ENCODE measurements at regions of chr7 and their contacts with region 1.

Region 1: DNA sequence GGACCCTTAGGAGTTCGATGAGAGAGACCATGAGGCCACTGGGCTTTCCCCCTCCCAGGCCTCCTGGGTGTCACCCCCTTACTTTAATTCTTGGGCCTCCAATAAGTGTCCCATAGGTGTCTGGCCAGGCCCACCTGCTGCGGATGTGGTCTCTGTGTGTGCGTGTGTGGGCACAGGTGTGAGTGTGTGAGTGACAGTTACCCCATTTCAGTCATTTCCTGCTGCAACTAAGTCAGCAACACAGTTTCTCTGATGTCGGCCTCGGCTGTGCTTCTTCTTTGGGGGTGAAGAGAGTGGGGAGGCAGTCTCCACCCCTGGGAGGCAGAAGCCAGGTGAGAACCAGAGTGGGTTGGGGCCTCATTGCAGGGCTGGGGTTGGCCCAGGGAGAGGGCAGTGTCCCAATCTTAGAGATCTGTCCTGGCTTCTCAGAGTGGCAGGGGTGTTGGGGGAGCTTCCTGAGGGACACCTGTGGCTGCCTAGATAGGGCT is 1.5 kb downstream of the PVRIG start:
- DNase-seq: no peak
- H3K4me3 ChIP-seq: no peak overlapping the region
- H3K4me3 Mint-ChIP-seq: no peak overlapping the region
- H3K27ac Mint-ChIP-seq: no peak overlapping the region
- H3K4me1 ChIP-seq: no peaks in the 10 kb centered on the region
- H3K4me1 Mint-ChIP-seq: no peaks in the 10 kb centered on the region
- H3K27me3 ChIP-seq: no peaks in the 10 kb centered on the region
- H3K27me3 Mint-ChIP-seq: no peaks in the 10 kb centered on the region
- CTCF ChIP-seq: no peak

Region 2: DNA sequence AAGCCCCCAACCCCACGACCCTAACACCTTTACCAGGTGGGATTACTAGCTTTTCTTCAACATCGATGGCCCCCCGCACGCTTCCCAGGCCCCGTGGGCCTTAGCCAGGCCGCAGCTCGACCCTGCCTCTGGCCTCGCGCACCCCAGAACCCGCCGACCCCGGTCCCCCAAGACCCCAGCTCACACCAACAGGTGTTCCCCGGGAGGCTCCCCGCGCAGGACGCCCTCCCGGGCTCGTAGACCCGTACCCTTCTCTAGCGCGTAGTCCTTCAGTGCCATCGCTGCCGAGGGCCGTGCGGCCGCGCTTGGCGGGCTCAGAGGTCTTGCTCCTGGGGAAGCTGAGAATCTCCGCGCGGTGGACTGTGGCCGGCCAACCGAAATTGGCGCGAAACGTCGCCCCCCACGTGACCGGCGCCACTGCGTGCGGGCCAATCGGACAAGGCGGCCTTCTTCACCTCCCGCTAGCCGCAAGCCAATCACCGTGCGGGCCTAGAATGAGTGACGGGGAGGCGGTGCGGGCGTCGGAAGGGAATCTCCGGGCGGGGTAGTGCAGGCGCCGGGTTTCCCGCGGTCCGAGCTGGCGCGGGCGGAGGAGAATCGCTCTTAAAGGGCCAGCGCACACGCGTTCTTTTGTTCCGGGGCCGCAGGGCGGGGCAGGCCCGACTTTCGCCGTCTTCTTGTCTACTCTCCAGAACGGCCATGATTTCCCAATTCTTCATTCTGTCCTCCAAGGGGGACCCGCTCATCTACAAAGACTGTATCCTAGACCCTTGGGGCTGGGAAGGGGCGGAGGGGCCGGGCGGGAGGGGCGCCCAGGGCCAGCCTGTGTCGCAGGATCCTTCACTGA is 120.0 kb before region 1 on chr7 and contains the starts of genes AP4M1 and MCM7:
- CTCF ChIA-PET with region 1: no interaction called
- POLR2A ChIA-PET with region 1: no interaction called
- intact Hi-C with region 1: no loop called
- DNase-seq: peak; percentile 99 to 100
- H3K4me3 ChIP-seq: peak within 1 kb of the TSS; percentile 93
- H3K4me3 Mint-ChIP-seq: peak within 1 kb of the TSS; percentile 95
- H3K27ac Mint-ChIP-seq: peak within 1 kb of the TSS; percentile 99
- H3K4me1 ChIP-seq: peaks cover 5% of the 10 kb centered on the region; the same call in 1 of the 2 replicates
- H3K4me1 Mint-ChIP-seq: peaks cover 23% of the 10 kb centered on the region
- H3K27me3 ChIP-seq: no peaks in the 10 kb centered on the region
- H3K27me3 Mint-ChIP-seq: no peaks in the 10 kb centered on the region
- CTCF ChIP-seq: no peak
- total RNA-seq, gene AP4M1: 14.9 and 16.2 TPM in 2 replicates
- total RNA-seq, gene MCM7: 227 and 240 TPM in 2 replicates

Region 3: GRCh38 chr7:100132697-100133151 is 88.6 kb before region 1 on chr7:
- CTCF ChIA-PET with region 1: interaction called, 13 read pairs
- POLR2A ChIA-PET with region 1: interaction called, 8 read pairs
- intact Hi-C with region 1: loop called (anchors 1 kb)
- DNase-seq: peak; percentile 77 to 80
- H3K4me3 ChIP-seq: no peak overlapping the region
- H3K4me3 Mint-ChIP-seq: no peak overlapping the region
- H3K27ac Mint-ChIP-seq: no peak overlapping the region
- H3K4me1 ChIP-seq: peaks cover 7% of the 10 kb centered on the region; the same call in 1 of the 2 replicates
- H3K4me1 Mint-ChIP-seq: peaks cover 17% of the 10 kb centered on the region
- H3K27me3 ChIP-seq: no peaks in the 10 kb centered on the region
- H3K27me3 Mint-ChIP-seq: no peaks in the 10 kb centered on the region
- CTCF ChIP-seq: peak; percentile 91 to 95

Region 4: DNA sequence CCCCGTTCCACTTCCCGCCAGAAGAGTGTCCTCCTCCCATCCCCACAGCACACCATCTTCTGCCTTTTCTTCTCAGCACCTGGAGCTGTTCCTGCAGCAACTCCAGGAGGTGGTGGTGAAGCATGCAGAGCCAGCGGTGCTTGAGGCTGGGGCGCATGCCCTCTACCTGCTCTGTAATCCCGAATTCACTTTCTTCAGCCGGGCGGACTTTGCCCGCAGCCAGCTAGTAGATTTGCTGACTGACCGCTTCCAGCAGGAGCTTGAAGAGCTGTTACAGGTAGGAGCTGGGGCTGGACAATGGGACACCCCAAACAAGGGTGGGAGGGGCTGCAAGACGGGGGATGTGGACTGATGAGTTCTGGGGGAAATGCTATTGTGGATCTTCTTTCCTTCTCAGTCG is 20.6 kb before region 1 on chr7:
- CTCF ChIA-PET with region 1: no interaction called
- POLR2A ChIA-PET with region 1: no interaction called
- intact Hi-C with region 1: loop called (anchors 1 kb)
- DNase-seq: peak; percentile 59 to 61
- H3K4me3 ChIP-seq: no peak overlapping the region
- H3K4me3 Mint-ChIP-seq: peak overlapping the region; percentile 18
- H3K27ac Mint-ChIP-seq: peak overlapping the region; percentile 1
- H3K4me1 ChIP-seq: peaks cover 15% of the 10 kb centered on the region
- H3K4me1 Mint-ChIP-seq: peaks cover 18% of the 10 kb centered on the region
- H3K27me3 ChIP-seq: no peaks in the 10 kb centered on the region
- H3K27me3 Mint-ChIP-seq: no peaks in the 10 kb centered on the region
- CTCF ChIP-seq: peak in 1 of 2 experiments; percentile 4

Region 5: DNA sequence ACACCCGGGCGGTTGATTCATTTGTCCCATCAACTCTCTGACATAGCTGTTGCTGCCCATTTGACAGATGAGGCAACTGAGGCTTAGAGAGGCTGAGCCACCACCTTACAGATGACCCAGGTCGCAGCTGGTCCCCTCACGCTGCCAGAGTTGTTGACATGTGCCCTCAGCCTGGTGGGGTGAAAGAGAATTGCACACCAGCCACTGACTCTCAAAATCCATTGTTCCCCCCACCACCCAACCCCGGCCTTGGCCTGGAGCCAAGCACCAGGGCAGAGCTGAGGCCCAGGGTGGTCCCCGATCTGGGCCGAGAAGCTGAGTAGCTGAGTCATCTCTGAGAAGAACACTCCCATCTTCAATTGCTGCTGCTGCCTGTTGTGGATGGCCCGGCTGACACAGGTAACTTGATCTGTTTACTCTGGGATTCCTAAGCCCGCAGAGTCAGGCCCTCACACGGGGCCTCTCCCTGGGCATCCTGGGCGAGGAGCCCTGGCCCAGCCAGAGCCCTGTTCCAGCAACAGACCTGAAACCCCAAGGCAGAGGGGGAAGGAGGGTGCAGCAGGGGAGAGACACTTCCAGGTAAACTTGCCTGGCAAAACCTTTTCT is 26.0 kb after region 1 on chr7:
- CTCF ChIA-PET with region 1: interaction called, 10 read pairs
- POLR2A ChIA-PET with region 1: no interaction called
- intact Hi-C with region 1: no loop called
- DNase-seq: peak; percentile 83 to 90
- H3K4me3 ChIP-seq: no peak overlapping the region
- H3K4me3 Mint-ChIP-seq: peak overlapping the region; percentile 59
- H3K27ac Mint-ChIP-seq: peak overlapping the region; percentile 97
- H3K4me1 ChIP-seq: peaks cover 16% of the 10 kb centered on the region
- H3K4me1 Mint-ChIP-seq: peaks cover 19% of the 10 kb centered on the region
- H3K27me3 ChIP-seq: no peaks in the 10 kb centered on the region
- H3K27me3 Mint-ChIP-seq: no peaks in the 10 kb centered on the region
- CTCF ChIP-seq: peak; percentile 10 to 31